ENCODE measurements at regions of chr11 and their contacts with region 1.

Region 1: DNA sequence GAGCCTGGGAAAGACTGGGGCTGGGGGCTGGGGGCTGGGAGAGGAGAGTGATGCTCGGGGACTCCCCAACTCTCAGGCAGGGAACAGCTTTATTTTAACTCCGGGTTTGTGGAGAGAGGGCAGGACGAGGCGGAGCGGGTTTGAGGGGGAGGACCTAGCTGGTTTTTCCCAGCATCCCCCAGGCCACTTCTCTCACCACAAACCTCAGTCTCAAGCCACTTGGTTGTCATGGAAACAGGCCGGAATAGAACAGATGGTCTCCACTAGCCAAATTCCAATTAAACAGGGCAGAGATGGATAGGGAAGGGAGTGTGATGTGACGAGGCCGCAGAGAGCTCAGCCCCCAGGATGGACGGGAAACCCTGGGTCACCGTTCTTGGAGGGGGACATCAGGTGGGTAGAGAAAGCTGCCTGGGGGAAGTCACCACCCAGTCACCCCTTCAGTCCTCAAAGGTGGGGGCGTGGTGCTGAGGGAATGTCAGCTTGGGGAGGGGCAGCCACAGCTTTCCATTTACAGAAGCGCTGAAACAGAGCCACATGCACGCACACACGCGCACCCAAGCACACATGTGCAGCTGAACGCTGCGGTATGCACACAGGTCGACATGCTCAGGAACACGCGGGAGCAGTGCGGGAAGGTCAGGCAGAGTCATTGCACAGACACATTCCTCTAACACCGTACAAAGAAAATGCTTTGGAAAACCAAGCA is 19.2 kb downstream of the NECTIN1 start:
- DNase-seq: peak; percentile 75
- CTCF ChIP-seq: no peak

Region 2: GRCh38 chr11:119624102-119624615 is 85.6 kb before region 1 on chr11:
- CTCF ChIA-PET with region 1: no interaction called
- POLR2A ChIA-PET with region 1: no interaction called
- DNase-seq: peak; percentile 67
- CTCF ChIP-seq: peak; percentile 22

Region 3: GRCh38 chr11:119721129-119722120 is 11.6 kb after region 1 on chr11:
- CTCF ChIA-PET with region 1: interaction called, 15 read pairs
- POLR2A ChIA-PET with region 1: interaction called, 7 read pairs
- DNase-seq: no peak
- CTCF ChIP-seq: peak; percentile 19